Pancreas (tissue), 10 donors: ENCODE measurements at regions of chr1 and their contacts with region 1.

Region 1: DNA sequence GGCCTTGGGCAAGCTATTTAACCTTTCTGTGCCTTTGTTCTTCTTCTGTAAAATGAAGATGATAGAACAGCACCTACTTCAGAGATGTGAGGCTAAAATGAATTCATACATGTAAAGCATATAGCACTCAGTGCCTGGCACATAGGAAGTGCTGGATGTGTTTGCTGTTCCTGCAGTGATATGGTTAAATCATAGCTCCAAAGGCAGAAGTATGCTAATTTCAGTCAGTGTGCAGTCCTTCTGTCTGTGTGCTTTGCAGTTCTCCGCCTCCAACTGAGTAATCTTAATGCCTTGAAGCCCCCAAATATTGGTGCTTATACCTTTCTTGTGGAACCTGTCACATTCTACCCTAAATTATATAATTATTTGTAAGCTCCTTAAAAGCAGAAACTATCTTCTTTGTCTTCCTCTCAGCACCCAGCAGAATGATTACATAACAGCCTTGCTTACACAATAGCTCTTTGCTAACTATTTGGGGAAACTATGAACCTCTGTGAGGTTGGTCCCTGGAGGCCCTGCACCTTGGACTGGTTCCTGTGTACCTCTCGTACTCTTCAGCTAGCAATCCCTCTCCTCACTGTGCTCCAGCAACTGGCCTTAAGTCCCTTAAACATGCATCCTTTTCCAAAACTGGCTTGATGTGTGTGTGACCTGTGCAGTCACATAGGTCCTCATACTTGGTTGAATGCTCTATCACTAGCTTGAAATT is 57.0 kb upstream of the CACYBP start:
- DNase-seq: no peak
- ATAC-seq: peak; percentile 28 to 75 (median 72)
- H3K4me3 ChIP-seq: no peak overlapping the region
- H3K27ac ChIP-seq: no peak overlapping the region
- H3K4me1 ChIP-seq: peaks cover 11 to 31% (median 30%) of the 10 kb centered on the region in 3 donors
- H3K27me3 ChIP-seq: no peaks in the 10 kb centered on the region
- CTCF ChIP-seq: no peak

Region 2: GRCh38 chr1:174883409-174883808 is 59.3 kb before region 1 on chr1:
- intact Hi-C with region 1: loop called in 1 of 3 experiments (anchors 10 kb)
- DNase-seq: no peak
- ATAC-seq: peak in 3 of 4 donors; percentile 44 to 63 (median 56)
- H3K4me3 ChIP-seq: peak overlapping the region in 1 of 4 donors; percentile 1
- H3K27ac ChIP-seq: no peak overlapping the region
- H3K4me1 ChIP-seq: peaks cover 6 to 29% (median 10%) of the 10 kb centered on the region in 3 donors
- H3K27me3 ChIP-seq: no peaks in the 10 kb centered on the region
- CTCF ChIP-seq: no peak